ENCODE measurements at regions of chr21 and their contacts with region 1.

Region 1: GRCh38 chr21:34022627-34023335 is 50.6 kb upstream of the MRPS6 start:
- DNase-seq: peak in 19 of 35 experiments; percentile 8 to 42 (median 18)
- ATAC-seq: peak; percentile 52 to 76 (median 63)
- H3K4me3 ChIP-seq: no peak overlapping the region
- H3K4me3 Mint-ChIP-seq: no peak overlapping the region
- H3K27ac ChIP-seq: peak overlapping the region; percentile 52
- H3K27ac Mint-ChIP-seq: no peak overlapping the region
- H3K4me1 ChIP-seq: peaks cover 17 to 25% of the 10 kb centered on the region in 2 experiments
- H3K4me1 Mint-ChIP-seq: peaks cover 13 to 26% (median 18%) of the 10 kb centered on the region in 3 donors
- H3K27me3 ChIP-seq: no peaks in the 10 kb centered on the region
- H3K27me3 Mint-ChIP-seq: no peaks in the 10 kb centered on the region

Region 2: DNA sequence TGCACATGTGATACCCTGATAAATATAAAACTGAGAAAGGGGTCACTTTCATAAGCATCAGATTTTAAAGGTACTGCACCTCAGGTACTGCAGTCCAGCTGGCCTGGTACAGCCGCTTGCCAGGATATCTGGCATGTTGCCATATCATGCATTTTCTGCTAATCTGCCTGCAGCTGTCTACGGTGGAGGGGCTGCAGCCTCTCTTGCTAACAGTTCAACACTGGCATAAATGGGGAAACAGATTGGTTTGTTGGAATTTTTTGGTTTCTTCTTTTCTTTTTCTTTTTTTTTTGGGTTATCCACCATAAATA is 1815.4 kb before region 1 on chr21:
- CTCF ChIA-PET with region 1: no interaction called
- POLR2A ChIA-PET with region 1: no interaction called
- DNase-seq: no peak
- ATAC-seq: no peak
- H3K4me3 ChIP-seq: no peak overlapping the region
- H3K4me3 Mint-ChIP-seq: no peak overlapping the region
- H3K27ac ChIP-seq: no peak overlapping the region
- H3K27ac Mint-ChIP-seq: no peak overlapping the region
- H3K4me1 ChIP-seq: no peaks in the 10 kb centered on the region
- H3K4me1 Mint-ChIP-seq: no peaks in the 10 kb centered on the region
- H3K27me3 ChIP-seq: no peaks in the 10 kb centered on the region
- H3K27me3 Mint-ChIP-seq: peaks cover 0 to 5% of the 10 kb centered on the region in 2 donors

Region 3: DNA sequence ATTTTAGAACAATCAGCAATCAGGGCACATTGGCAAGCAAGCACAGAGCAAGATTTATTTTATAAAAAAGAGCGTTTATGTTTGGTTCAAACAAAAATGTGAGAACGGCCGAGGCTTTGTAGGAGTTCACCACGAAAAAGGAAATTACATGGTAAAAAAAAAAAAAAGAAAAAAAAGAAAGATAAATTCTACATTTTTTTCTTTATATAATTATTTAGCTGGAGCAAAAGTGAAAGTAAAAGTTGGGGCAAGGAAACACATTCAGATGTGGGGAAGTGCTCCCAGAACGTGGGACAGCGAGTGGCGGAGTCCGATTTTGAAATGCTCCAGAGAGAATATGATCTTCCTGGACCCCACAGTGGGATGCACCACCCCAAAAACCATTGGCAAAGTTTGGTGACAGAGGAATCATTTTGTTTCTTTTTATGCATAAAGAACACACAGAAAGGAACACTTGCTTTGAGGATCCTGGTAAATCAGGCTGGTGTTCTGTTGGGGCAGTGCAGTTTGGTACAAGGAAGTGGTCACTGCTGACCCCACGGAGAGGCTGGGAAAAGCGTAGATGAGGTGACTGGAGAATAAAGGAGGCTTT is 90.9 kb before region 1 on chr21:
- CTCF ChIA-PET with region 1: no interaction called
- POLR2A ChIA-PET with region 1: interaction called in 1 of 2 experiments, 12 read pairs
- DNase-seq: peak in 4 of 35 experiments; percentile 12 to 28 (median 20)
- ATAC-seq: peak in 1 of 4 experiments; percentile 32
- H3K4me3 ChIP-seq: peak overlapping the region; percentile 52 to 91
- H3K4me3 Mint-ChIP-seq: peak overlapping the region; percentile 97 to 99 (median 99)
- H3K27ac ChIP-seq: peak overlapping the region; percentile 92
- H3K27ac Mint-ChIP-seq: peak overlapping the region; percentile 98 to 100
- H3K4me1 ChIP-seq: peaks cover 38 to 43% of the 10 kb centered on the region in 2 experiments
- H3K4me1 Mint-ChIP-seq: peaks cover 42 to 49% (median 45%) of the 10 kb centered on the region in 3 donors
- H3K27me3 ChIP-seq: no peaks in the 10 kb centered on the region
- H3K27me3 Mint-ChIP-seq: no peaks in the 10 kb centered on the region

Region 4: GRCh38 chr21:34037009-34037795 is 14.4 kb after region 1 on chr21:
- CTCF ChIA-PET with region 1: no interaction called
- POLR2A ChIA-PET with region 1: no interaction called
- DNase-seq: no peak
- ATAC-seq: no peak
- H3K4me3 ChIP-seq: no peak overlapping the region
- H3K4me3 Mint-ChIP-seq: no peak overlapping the region
- H3K27ac ChIP-seq: no peak overlapping the region
- H3K27ac Mint-ChIP-seq: no peak overlapping the region
- H3K4me1 ChIP-seq: no peaks in the 10 kb centered on the region
- H3K4me1 Mint-ChIP-seq: peaks cover 0 to 2% (median 0%) of the 10 kb centered on the region in 3 donors
- H3K27me3 ChIP-seq: no peaks in the 10 kb centered on the region
- H3K27me3 Mint-ChIP-seq: no peaks in the 10 kb centered on the region

Region 5: GRCh38 chr21:34792504-34793089 is 769.8 kb after region 1 on chr21:
- CTCF ChIA-PET with region 1: no interaction called
- POLR2A ChIA-PET with region 1: no interaction called
- DNase-seq: no peak
- ATAC-seq: peak in 1 of 4 experiments; percentile 10
- H3K4me3 ChIP-seq: no peak overlapping the region
- H3K4me3 Mint-ChIP-seq: no peak overlapping the region
- H3K27ac ChIP-seq: no peak overlapping the region
- H3K27ac Mint-ChIP-seq: no peak overlapping the region
- H3K4me1 ChIP-seq: no peaks in the 10 kb centered on the region
- H3K4me1 Mint-ChIP-seq: no peaks in the 10 kb centered on the region
- H3K27me3 ChIP-seq: no peaks in the 10 kb centered on the region
- H3K27me3 Mint-ChIP-seq: no peaks in the 10 kb centered on the region